ENCODE measurements at regions of chr7 and their contacts with region 1.

Region 1: GRCh38 chr7:92119213-92119759 is 15.0 kb downstream of the CYP51A1 start:
- DNase-seq: no peak
- H3K4me3 ChIP-seq: no peak overlapping the region
- H3K27ac ChIP-seq: no peak overlapping the region
- H3K27me3 ChIP-seq: no peaks in the 10 kb centered on the region
- CTCF ChIP-seq: no peak

Region 2: DNA sequence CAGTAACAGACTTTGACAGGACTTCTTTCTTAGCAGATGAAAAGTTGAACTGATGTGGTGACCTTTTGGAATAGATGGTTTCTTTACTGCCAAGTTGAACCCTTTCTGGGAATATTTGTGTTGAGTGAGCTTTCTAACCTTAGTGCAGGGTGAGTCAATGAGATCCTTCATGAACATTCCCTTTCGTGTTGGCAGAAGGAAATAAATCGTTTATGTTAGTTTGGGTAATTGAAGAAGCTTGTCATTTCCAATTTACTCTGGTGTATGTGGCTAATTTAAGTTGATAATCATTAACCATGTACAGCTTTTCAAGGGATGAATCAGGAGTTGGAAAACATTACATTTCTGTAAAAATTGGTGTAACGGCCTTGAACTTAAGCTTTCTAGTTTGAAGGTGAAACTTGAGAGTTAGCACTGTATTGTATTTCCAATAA is 1606.4 kb before region 1 on chr7:
- CTCF ChIA-PET with region 1: no interaction called
- POLR2A ChIA-PET with region 1: no interaction called
- DNase-seq: no peak
- H3K4me3 ChIP-seq: no peak overlapping the region
- H3K27ac ChIP-seq: no peak overlapping the region
- H3K27me3 ChIP-seq: no peaks in the 10 kb centered on the region
- CTCF ChIP-seq: no peak

Region 3: GRCh38 chr7:91784463-91784862 is 334.8 kb before region 1 on chr7:
- CTCF ChIA-PET with region 1: no interaction called
- POLR2A ChIA-PET with region 1: no interaction called
- DNase-seq: peak; percentile 8
- H3K4me3 ChIP-seq: no peak overlapping the region
- H3K27ac ChIP-seq: no peak overlapping the region
- H3K27me3 ChIP-seq: peaks cover 4% of the 10 kb centered on the region
- CTCF ChIP-seq: peak; percentile 34

Region 4: GRCh38 chr7:92134271-92135051 is 15.2 kb after region 1 on chr7 and contains the start of gene CYP51A1:
- CTCF ChIA-PET with region 1: interaction called, 11 read pairs
- POLR2A ChIA-PET with region 1: no interaction called
- DNase-seq: peak; percentile 72
- H3K4me3 ChIP-seq: peak within 1 kb of the TSS; percentile 89
- H3K27ac ChIP-seq: peak within 1 kb of the TSS; percentile 90
- H3K27me3 ChIP-seq: no peaks in the 10 kb centered on the region
- CTCF ChIP-seq: no peak
- polyA plus RNA-seq, gene CYP51A1: 9.1 and 12.3 TPM in 2 replicates

Region 5: GRCh38 chr7:92228742-92229141 is 109.5 kb after region 1 on chr7:
- CTCF ChIA-PET with region 1: no interaction called
- POLR2A ChIA-PET with region 1: no interaction called
- DNase-seq: no peak
- H3K4me3 ChIP-seq: no peak overlapping the region
- H3K27ac ChIP-seq: no peak overlapping the region
- H3K27me3 ChIP-seq: no peaks in the 10 kb centered on the region
- CTCF ChIP-seq: no peak

Region 6: DNA sequence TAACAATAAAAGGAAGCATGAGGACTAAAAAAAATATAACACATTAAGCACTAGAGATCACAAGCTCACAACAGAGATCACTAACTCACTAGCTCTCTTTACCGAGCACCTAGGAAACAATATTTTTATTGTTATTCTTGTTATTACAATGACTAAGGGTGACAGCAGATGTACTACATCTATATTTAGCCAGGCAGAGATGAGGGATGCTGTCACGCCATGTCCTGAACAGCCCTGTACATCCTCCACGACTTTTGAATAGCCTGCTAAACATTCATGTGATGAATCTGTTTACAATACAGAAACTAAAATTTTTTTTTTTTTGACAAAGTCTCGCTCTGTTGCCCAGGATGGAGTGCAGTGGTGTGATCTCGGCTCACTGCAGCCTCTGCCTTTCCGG is 448.2 kb after region 1 on chr7:
- CTCF ChIA-PET with region 1: no interaction called
- POLR2A ChIA-PET with region 1: no interaction called
- DNase-seq: no peak
- H3K4me3 ChIP-seq: no peak overlapping the region
- H3K27ac ChIP-seq: no peak overlapping the region
- H3K27me3 ChIP-seq: no peaks in the 10 kb centered on the region
- CTCF ChIP-seq: no peak